Activated CD4-positive, alpha-beta T cell treated with anti-CD3 and anti-CD28 coated beads for 36 hours (primary cell): ENCODE measurements at regions of chr11 and their contacts with region 1.

Region 1: DNA sequence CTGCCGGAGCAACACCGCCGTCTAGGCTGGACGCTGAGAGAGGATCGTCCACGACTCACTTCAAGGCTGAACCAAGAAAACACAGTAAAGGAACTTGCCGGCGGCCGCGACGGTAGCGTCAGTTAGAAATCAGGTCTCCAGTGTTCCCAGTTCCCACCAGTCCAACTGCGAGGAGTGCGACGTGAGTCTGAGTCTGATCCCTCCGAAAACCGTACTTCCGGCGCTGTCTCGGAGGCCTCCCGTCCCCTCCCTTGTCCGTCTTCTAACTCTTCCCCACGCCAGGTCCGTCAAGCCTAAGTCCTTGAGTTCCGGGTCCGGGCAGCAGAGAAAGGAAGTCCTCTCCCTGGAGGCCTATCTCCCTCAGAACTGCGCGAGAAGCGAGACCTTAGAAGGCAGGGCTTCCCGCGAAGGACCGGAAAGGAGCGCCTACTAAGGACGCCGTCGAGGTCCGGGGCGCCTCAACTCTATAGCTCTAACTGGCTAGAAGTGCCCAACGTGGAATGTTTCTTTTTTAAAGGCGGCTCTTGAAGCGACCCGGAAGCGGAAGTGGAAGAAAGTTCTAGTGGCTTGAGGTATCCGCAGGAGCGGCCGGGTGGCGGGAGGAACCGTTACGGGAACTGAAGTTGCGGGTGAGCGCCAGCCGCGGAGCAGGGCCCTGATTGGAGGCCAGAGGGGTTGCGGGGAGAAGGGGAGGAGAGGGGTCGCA is at the starts of genes BANF1 and EIF1AD:
- DNase-seq: peak; percentile 95
- ATAC-seq: peak; percentile 88
- H3K4me3 Mint-ChIP-seq: peak within 1 kb of the TSS; percentile 100
- H3K27ac Mint-ChIP-seq: peak within 1 kb of the TSS; percentile 98
- H3K4me1 Mint-ChIP-seq: peaks cover 36% of the 10 kb centered on the region
- H3K27me3 Mint-ChIP-seq: no peaks in the 10 kb centered on the region
- total RNA-seq, gene BANF1: 233 to 293 TPM
- total RNA-seq, gene EIF1AD: 45.1 to 52.2 TPM

Region 2: DNA sequence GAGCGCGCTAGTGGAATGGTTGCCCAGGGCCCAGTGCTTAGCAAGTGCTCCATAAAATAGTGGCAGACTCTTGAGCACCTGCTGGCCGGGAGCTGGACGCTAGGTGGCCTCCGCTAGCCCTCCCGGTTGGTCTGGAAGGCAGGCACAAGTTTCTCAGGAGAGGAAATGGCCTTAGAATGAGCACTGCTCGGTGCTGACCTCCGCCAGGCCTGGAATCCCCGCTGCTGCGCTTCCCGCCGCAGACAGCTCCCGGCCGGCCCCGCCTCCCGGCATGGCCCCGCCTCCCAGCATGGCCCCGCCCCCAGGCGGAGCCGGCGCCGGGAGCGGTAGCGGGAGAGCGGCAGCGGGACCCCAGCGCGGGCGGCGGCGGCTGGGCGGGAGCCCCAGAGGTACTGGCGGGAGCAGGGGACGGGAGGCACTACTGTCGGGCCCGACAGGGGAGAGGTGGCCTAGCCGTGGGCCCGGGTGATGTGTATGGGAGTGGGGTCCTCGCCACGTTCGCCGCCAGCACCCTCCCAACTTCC is 364.2 kb before region 1 on chr11 and contains the start of gene SIPA1:
- CTCF ChIA-PET with region 1: no interaction called
- POLR2A ChIA-PET with region 1: no interaction called
- intact Hi-C with region 1: loop called in 1 of 2 experiments (anchors 1 kb)
- DNase-seq: peak; percentile 86
- ATAC-seq: peak; percentile 67
- H3K4me3 Mint-ChIP-seq: peak within 1 kb of the TSS; percentile 90
- H3K27ac Mint-ChIP-seq: peak within 1 kb of the TSS; percentile 95
- H3K4me1 Mint-ChIP-seq: peaks cover 42% of the 10 kb centered on the region
- H3K27me3 Mint-ChIP-seq: no peaks in the 10 kb centered on the region
- total RNA-seq, gene SIPA1: 181 to 202 TPM

Region 3: GRCh38 chr11:65833297-65834030 is 168.6 kb before region 1 on chr11 and contains the start of gene SNX32:
- CTCF ChIA-PET with region 1: no interaction called
- POLR2A ChIA-PET with region 1: no interaction called
- intact Hi-C with region 1: loop called in 1 of 2 experiments (anchors 1 kb)
- DNase-seq: peak; percentile 98
- ATAC-seq: peak; percentile 99
- H3K4me3 Mint-ChIP-seq: no peak within 1 kb of the TSS
- H3K27ac Mint-ChIP-seq: no peak within 1 kb of the TSS
- H3K4me1 Mint-ChIP-seq: peaks cover 22% of the 10 kb centered on the region
- H3K27me3 Mint-ChIP-seq: no peaks in the 10 kb centered on the region
- total RNA-seq, gene SNX32: 2.9 to 3.0 TPM

Region 4: GRCh38 chr11:65919146-65920033 is 82.7 kb before region 1 on chr11 and contains the start of gene DRAP1:
- CTCF ChIA-PET with region 1: no interaction called
- POLR2A ChIA-PET with region 1: no interaction called
- intact Hi-C with region 1: loop called in 1 of 2 experiments (anchors 1 kb)
- DNase-seq: peak; percentile 100
- ATAC-seq: peak; percentile 94
- H3K4me3 Mint-ChIP-seq: peak within 1 kb of the TSS; percentile 91
- H3K27ac Mint-ChIP-seq: peak within 1 kb of the TSS; percentile 88
- H3K4me1 Mint-ChIP-seq: peaks cover 35% of the 10 kb centered on the region
- H3K27me3 Mint-ChIP-seq: no peaks in the 10 kb centered on the region
- total RNA-seq, gene DRAP1: 111 to 158 TPM

Region 5: DNA sequence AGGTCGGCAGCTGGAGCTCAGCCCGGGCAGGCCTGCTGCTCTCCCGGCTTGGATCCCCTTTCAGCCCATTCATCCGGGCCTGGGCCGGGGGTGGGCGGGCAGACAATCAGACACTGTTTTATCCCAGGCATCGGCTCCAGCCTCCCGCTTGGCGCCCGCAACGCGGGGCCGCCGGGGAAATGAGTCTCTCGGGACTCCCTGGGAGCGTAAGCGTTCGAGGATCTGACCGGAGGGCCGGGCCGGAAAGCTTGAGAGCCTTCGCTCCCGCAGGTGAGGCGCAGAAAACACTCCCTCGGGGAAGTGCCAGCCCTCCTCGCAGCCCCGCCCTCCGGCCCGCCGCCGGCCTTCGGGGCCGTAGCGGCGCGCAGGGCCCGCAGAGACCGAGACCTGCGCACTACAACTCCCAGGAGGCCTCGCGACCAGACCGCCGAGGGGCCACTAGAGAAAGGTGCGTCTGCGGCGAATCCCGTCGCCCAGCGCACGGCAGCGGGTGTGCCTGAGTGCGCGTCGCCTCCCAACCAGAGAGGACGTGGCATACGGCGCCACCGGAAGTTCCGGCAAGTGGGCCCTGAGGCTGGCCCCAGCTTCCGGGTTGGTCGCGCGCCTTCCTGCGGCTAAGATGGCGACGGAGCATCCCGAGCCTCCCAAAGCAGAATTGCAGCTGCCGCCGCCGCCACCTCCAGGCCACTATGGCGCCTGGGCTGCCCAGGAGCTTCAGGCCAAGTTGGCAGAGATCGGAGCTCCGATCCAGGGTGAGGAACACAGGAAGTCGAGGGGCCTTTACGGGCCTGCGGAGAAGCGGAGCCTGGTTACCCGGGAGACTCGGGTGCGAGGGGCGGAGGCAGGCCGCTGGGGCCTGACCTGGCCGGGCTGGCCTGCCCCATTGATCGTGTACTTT is 49.9 kb after region 1 on chr11 and contains the start of gene SF3B2:
- CTCF ChIA-PET with region 1: no interaction called
- POLR2A ChIA-PET with region 1: interaction called, 3 read pairs
- intact Hi-C with region 1: loop called (anchors 1 to 5 kb)
- DNase-seq: peak; percentile 99
- ATAC-seq: peak; percentile 99
- H3K4me3 Mint-ChIP-seq: peak within 1 kb of the TSS; percentile 91
- H3K27ac Mint-ChIP-seq: peak within 1 kb of the TSS; percentile 95
- H3K4me1 Mint-ChIP-seq: peaks cover 36% of the 10 kb centered on the region
- H3K27me3 Mint-ChIP-seq: peaks cover 4% of the 10 kb centered on the region
- total RNA-seq, gene SF3B2: 265 to 270 TPM

Region 6: GRCh38 chr11:66113116-66113854 is 111.2 kb after region 1 on chr11:
- CTCF ChIA-PET with region 1: no interaction called
- POLR2A ChIA-PET with region 1: no interaction called
- intact Hi-C with region 1: no loop called
- DNase-seq: no peak
- ATAC-seq: peak; percentile 3
- H3K4me3 Mint-ChIP-seq: peak overlapping the region; percentile 57
- H3K27ac Mint-ChIP-seq: peak overlapping the region; percentile 91
- H3K4me1 Mint-ChIP-seq: peaks cover 96% of the 10 kb centered on the region
- H3K27me3 Mint-ChIP-seq: no peaks in the 10 kb centered on the region

Region 7: GRCh38 chr11:66262696-66263095 is 260.6 kb after region 1 on chr11:
- CTCF ChIA-PET with region 1: no interaction called
- POLR2A ChIA-PET with region 1: no interaction called
- intact Hi-C with region 1: no loop called
- DNase-seq: no peak
- ATAC-seq: no peak
- H3K4me3 Mint-ChIP-seq: no peak overlapping the region
- H3K27ac Mint-ChIP-seq: no peak overlapping the region
- H3K4me1 Mint-ChIP-seq: peaks cover 24% of the 10 kb centered on the region
- H3K27me3 Mint-ChIP-seq: no peaks in the 10 kb centered on the region

Region 8: GRCh38 chr11:66311965-66312548 is 310.0 kb after region 1 on chr11:
- CTCF ChIA-PET with region 1: no interaction called
- POLR2A ChIA-PET with region 1: no interaction called
- intact Hi-C with region 1: loop called in 1 of 2 experiments (anchors 1 kb)
- DNase-seq: peak; percentile 98
- ATAC-seq: peak; percentile 83
- H3K4me3 Mint-ChIP-seq: peak overlapping the region; percentile 79
- H3K27ac Mint-ChIP-seq: peak overlapping the region; percentile 91
- H3K4me1 Mint-ChIP-seq: peaks cover 33% of the 10 kb centered on the region
- H3K27me3 Mint-ChIP-seq: no peaks in the 10 kb centered on the region